ENCODE measurements at regions of chr18 and their contacts with region 1.

Region 1: DNA sequence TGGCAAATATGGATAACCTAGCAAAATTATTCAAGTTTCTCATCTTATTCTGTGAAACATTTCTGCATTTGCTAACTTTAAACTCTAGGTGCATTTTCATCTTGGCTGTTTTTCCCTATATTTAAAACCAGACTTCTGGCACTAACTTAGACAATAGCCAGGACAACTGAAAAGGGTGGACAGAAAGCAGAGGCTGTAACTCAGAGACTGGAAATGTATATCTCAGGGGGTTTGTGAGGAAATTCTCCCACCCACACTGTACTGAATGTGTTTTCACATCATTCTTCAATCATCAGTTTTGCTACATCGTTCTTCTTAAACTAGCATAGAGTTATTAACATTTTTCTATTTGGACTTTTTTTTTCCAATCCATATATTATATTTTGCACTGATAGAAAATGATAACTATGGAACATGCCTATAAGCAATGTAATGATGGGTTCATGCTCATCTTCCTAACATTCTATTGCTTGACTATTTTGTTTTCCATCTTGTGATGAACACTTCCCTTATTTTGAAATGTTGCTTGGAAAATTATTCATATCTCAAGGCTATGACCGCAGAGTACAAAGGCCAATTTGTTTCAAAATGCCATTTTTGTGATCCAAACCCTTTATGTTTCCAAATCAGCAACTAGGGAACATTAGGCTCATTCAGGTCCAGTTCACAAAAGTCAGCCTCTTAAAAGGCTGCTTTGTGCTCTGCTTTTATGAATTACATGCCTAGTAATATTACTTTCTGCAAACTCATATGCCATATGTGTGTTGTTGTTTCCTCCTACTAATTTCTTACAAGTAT is 125.8 kb upstream of the CDH19 start:
- H3K4me3 Mint-ChIP-seq: no peak overlapping the region
- H3K27ac Mint-ChIP-seq: no peak overlapping the region
- H3K4me1 Mint-ChIP-seq: no peaks in the 10 kb centered on the region
- H3K27me3 Mint-ChIP-seq: no peaks in the 10 kb centered on the region

Region 2: DNA sequence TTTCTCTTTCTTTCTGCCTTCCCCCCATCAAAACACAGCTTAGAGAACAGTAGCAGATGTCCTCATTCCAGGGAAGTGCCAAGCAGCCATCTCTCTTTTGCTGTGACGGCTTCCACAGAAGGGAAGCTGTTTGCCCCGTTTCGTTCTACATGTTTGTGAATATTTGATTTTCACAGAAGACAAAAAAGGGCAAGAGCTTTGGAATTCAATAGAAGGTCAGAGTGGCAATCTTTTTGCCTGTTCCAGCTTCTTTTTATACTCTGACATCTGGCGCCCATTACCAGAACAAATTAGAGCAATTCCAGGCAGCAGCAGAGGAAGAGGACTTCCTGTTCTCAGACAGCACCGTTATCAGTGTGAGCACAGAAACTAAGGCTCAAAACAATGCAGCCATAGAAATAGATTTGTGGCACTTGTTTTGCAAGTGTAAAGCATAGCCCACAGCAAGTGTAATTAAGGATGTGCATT is 46.8 kb before region 1 on chr18:
- intact Hi-C with region 1: loop called (anchors 10 kb)
- H3K4me3 Mint-ChIP-seq: peak overlapping the region; percentile 30
- H3K27ac Mint-ChIP-seq: peak overlapping the region; percentile 46
- H3K4me1 Mint-ChIP-seq: peaks cover 6% of the 10 kb centered on the region
- H3K27me3 Mint-ChIP-seq: no peaks in the 10 kb centered on the region

Measured in dendritic cell treated with granulocyte-macrophage colony-stimulating factor and Interleukin-4, amounts not matched to agents 40 ng/mL and 50 ng/mL, for 4 days (primary cell).